Ascending aorta (tissue), 2 donors: ENCODE measurements at regions of chr2 and their contacts with region 1.

Region 1: GRCh38 chr2:207769597-207770486 is at the start of gene FZD5:
- DNase-seq: peak; percentile 87 to 98
- H3K4me3 ChIP-seq: peak within 1 kb of the TSS; percentile 75 to 83
- H3K27ac ChIP-seq: peak within 1 kb of the TSS; percentile 61 to 65
- H3K4me1 ChIP-seq: peaks cover 8 to 9% of the 10 kb centered on the region in 2 donors
- H3K27me3 ChIP-seq: no peaks in the 10 kb centered on the region
- CTCF ChIP-seq: peak; percentile 45 to 68 (median 47)
- total RNA-seq, gene FZD5: 6.9 TPM

Region 2: GRCh38 chr2:206765242-206766056 is 1004.4 kb before region 1 on chr2 and contains the starts of genes FASTKD2 and MDH1B:
- intact Hi-C with region 1: loop called (anchors 5 kb)
- DNase-seq: peak; percentile 77 to 97
- H3K4me3 ChIP-seq: peak within 1 kb of the TSS; percentile 85 to 92
- H3K27ac ChIP-seq: peak within 1 kb of the TSS; percentile 85 to 90
- H3K4me1 ChIP-seq: peaks cover 5 to 24% of the 10 kb centered on the region in 2 donors
- H3K27me3 ChIP-seq: no peaks in the 10 kb centered on the region
- CTCF ChIP-seq: no peak
- total RNA-seq, gene FASTKD2: 41.5 TPM
- total RNA-seq, gene MDH1B: not detected

Region 3: GRCh38 chr2:207676827-207677354 is 93.0 kb before region 1 on chr2:
- intact Hi-C with region 1: no loop called
- DNase-seq: no peak
- H3K4me3 ChIP-seq: peak overlapping the region; percentile 7 to 16
- H3K27ac ChIP-seq: peak overlapping the region in 1 of 2 donors; percentile 11
- H3K4me1 ChIP-seq: peaks cover 0 to 8% of the 10 kb centered on the region in 2 donors
- H3K27me3 ChIP-seq: no peaks in the 10 kb centered on the region
- CTCF ChIP-seq: no peak

Region 4: GRCh38 chr2:207710814-207711740 is 58.8 kb before region 1 on chr2 and contains the start of gene CCNYL1:
- intact Hi-C with region 1: loop called (anchors 1 kb)
- DNase-seq: peak; percentile 95 to 99
- H3K4me3 ChIP-seq: peak within 1 kb of the TSS; percentile 75 to 92
- H3K27ac ChIP-seq: peak within 1 kb of the TSS; percentile 88 to 90
- H3K4me1 ChIP-seq: peaks cover 0 to 6% of the 10 kb centered on the region in 2 donors
- H3K27me3 ChIP-seq: no peaks in the 10 kb centered on the region
- CTCF ChIP-seq: peak; percentile 17 to 55 (median 17)
- total RNA-seq, gene CCNYL1: 12.3 TPM

Region 5: GRCh38 chr2:207951734-207952470 is 182.1 kb after region 1 on chr2:
- intact Hi-C with region 1: no loop called
- DNase-seq: no peak
- H3K4me3 ChIP-seq: no peak overlapping the region
- H3K27ac ChIP-seq: no peak overlapping the region
- H3K4me1 ChIP-seq: no peaks in the 10 kb centered on the region
- H3K27me3 ChIP-seq: no peaks in the 10 kb centered on the region
- CTCF ChIP-seq: no peak

Region 6: DNA sequence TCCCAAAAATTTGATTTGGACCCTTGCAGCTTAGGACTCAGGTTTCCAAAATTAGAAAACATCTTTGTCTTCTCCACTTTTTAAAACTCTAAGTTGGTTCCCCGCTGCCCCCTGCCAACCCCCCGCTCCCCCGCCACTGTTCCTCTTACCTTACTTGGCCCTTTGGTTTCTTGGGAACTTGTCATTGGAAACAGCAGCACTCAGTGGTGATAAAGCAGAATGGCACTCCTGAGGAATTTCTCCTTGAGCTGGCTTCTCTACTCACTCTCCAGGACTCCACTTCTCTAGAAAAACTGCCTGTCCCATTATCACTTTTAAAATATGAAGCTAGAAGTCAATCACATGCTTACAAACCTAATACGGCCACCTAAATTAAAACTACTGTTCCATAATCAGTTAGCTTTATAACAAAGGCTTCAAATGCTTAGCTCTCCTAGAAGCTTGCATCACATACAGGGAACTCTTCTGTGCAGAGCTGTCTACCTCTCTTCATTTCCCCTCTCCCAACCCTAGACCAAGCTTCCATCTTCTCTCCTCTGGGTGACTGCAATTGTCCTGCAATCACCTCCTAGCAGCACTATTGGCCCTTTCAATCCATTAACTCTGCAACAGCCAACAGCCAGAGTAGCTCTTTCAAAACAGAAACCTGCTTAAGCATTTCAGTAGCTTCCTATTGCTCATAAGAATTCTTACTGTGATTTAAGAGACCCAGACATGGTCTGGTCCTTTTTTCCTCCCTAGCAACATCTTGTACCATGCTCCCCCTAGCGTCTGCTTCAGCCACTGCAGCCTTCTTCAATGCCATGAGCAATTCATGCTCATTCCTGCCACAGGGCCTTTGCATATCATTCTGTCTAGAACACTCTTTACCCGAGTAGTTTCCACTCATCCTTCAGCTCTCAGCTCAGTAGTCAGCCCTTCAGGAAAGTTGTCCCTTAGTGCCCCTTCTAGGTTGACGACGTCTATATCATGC is 270.6 kb after region 1 on chr2:
- intact Hi-C with region 1: loop called (anchors 5 kb)
- DNase-seq: peak; percentile 11 to 78
- H3K4me3 ChIP-seq: no peak overlapping the region
- H3K27ac ChIP-seq: no peak overlapping the region
- H3K4me1 ChIP-seq: no peaks in the 10 kb centered on the region
- H3K27me3 ChIP-seq: no peaks in the 10 kb centered on the region
- CTCF ChIP-seq: peak; percentile 56 to 66 (median 65)